Panc1 (cell line): ENCODE measurements at regions of chr1 and their contacts with region 1.

Region 1: DNA sequence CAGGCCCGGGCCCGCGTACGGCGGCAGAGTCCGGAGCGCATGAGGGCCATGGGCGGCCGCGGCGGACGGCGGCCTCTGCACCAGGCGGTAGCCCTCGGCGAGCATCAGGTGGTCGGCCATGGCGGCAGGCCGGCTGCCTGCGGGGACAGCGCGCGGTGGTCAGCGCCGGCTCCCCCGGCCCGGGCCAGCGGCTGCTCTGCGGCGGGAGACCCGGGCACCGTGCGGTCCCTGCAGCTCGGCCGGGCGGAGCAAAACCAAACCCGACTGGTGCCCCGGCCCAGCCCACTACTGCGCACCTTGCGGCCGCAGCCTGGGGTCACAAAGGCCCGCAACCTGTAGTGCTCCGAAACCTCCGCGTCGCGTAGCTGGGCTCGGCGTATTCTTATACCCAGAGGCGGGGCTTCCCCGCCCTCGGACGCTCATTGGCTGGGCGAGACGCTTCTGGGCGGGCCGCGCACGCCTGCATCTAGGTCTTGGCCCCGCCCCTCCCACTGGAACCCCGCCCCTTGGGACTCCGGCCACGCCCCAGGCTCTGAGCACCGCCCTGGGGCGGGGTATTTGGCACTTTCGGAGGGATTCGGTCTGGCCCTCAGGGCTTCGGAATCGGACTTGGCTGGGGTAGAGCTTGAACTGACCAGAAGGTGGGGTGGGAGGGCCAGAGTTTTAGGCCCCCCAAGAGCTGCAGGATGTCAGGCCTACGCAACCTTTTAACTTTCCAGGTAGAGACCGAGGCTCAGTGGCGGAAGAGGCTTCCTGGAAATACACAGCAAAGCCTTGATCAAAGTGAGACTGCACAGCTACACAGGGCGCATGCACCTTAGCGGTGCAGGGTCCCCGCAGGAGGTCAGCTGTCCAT is at the start of gene CITED4:
- DNase-seq: peak; percentile 89
- ATAC-seq: peak; percentile 86
- H3K4me3 ChIP-seq: peak within 1 kb of the TSS; percentile 72 to 82
- H3K27ac ChIP-seq: peak within 1 kb of the TSS; percentile 98
- H3K4me1 ChIP-seq: peaks cover 71% of the 10 kb centered on the region
- H3K27me3 ChIP-seq: no peaks in the 10 kb centered on the region
- CTCF ChIP-seq: peak; percentile 79
- total RNA-seq, gene CITED4: 145 TPM

Region 2: GRCh38 chr1:40802078-40802741 is 60.0 kb before region 1 on chr1:
- CTCF ChIA-PET with region 1: no interaction called
- POLR2A ChIA-PET with region 1: no interaction called
- in situ Hi-C with region 1: no loop called
- intact Hi-C with region 1: no loop called
- DNase-seq: no peak
- ATAC-seq: peak; percentile 89
- H3K4me3 ChIP-seq: peak overlapping the region; percentile 56 to 71
- H3K27ac ChIP-seq: peak overlapping the region; percentile 71
- H3K4me1 ChIP-seq: peaks cover 8% of the 10 kb centered on the region
- H3K27me3 ChIP-seq: no peaks in the 10 kb centered on the region
- CTCF ChIP-seq: no peak

Region 3: DNA sequence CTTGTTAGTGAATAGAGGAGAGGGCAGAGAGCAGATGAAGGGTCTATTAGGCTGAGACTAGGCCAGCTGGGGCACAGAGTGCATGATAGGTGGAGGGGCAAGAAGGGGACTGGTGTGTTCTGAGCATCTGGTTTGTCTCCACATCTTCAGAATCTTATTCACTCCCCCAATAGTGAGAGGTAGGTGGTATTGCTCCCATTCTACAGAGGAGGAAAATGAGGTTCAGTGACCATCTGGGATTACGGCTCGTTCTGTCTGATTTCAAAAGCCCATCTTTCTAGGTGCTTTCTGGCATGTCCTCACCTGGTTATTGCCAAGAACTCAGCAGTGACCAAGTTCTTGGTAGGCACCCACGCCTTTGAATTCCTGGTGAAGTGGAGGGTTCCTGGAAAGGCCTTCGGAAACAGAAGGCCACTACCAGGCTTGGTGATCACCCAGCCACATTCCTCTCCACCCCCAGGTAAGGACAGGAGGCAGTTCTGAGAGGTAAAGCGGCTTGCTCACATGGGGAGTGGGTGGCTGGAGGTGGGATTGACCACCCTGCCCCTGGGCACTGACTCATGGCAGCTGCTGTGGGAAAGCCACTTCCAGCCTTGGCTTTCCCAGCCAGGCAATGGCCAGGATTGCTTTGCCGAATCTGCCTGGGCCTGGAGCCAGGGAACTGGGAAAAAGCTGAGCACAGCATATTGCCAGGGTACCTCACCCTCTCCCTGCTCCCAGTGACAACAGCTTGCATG is 18.7 kb after region 1 on chr1:
- CTCF ChIA-PET with region 1: no interaction called
- POLR2A ChIA-PET with region 1: interaction called, 18 read pairs
- in situ Hi-C with region 1: no loop called
- intact Hi-C with region 1: no loop called
- DNase-seq: no peak
- ATAC-seq: peak; percentile 55
- H3K4me3 ChIP-seq: no peak overlapping the region
- H3K27ac ChIP-seq: peak overlapping the region; percentile 69
- H3K4me1 ChIP-seq: peaks cover 24% of the 10 kb centered on the region
- H3K27me3 ChIP-seq: no peaks in the 10 kb centered on the region
- CTCF ChIP-seq: no peak